Activated CD4-positive, alpha-beta memory T cell treated with anti-CD3 and anti-CD28 coated beads, Interleukin-2, amount 10 ng/mL, durations not matched to agents 7 days and 5 days (primary cell): ENCODE measurements at regions of chr4 and their contacts with region 1.

Region 1: GRCh38 chr4:40316782-40317635 is 18.1 kb upstream of the CHRNA9 start:
- DNase-seq: peak; percentile 72
- H3K4me3 Mint-ChIP-seq: peak overlapping the region; percentile 65
- H3K27ac Mint-ChIP-seq: peak overlapping the region; percentile 81
- H3K4me1 Mint-ChIP-seq: peaks cover 35% of the 10 kb centered on the region
- H3K27me3 Mint-ChIP-seq: peaks cover 8% of the 10 kb centered on the region

Region 2: GRCh38 chr4:40056716-40057585 is 260.1 kb before region 1 on chr4 and contains the start of gene N4BP2:
- CTCF ChIA-PET with region 1: interaction called, 20 read pairs
- POLR2A ChIA-PET with region 1: interaction called, 18 read pairs
- DNase-seq: peak; percentile 75
- H3K4me3 Mint-ChIP-seq: peak within 1 kb of the TSS; percentile 97
- H3K27ac Mint-ChIP-seq: peak within 1 kb of the TSS; percentile 99
- H3K4me1 Mint-ChIP-seq: peaks cover 37% of the 10 kb centered on the region
- H3K27me3 Mint-ChIP-seq: no peaks in the 10 kb centered on the region
- total RNA-seq, gene N4BP2: 22.5 to 26.8 TPM

Region 3: GRCh38 chr4:40193016-40193571 is 123.9 kb before region 1 on chr4:
- CTCF ChIA-PET with region 1: interaction called, 13 read pairs
- POLR2A ChIA-PET with region 1: interaction called, 143 read pairs
- DNase-seq: no peak
- H3K4me3 Mint-ChIP-seq: peak overlapping the region; percentile 97
- H3K27ac Mint-ChIP-seq: peak overlapping the region; percentile 99
- H3K4me1 Mint-ChIP-seq: peaks cover 67% of the 10 kb centered on the region
- H3K27me3 Mint-ChIP-seq: no peaks in the 10 kb centered on the region

Region 4: DNA sequence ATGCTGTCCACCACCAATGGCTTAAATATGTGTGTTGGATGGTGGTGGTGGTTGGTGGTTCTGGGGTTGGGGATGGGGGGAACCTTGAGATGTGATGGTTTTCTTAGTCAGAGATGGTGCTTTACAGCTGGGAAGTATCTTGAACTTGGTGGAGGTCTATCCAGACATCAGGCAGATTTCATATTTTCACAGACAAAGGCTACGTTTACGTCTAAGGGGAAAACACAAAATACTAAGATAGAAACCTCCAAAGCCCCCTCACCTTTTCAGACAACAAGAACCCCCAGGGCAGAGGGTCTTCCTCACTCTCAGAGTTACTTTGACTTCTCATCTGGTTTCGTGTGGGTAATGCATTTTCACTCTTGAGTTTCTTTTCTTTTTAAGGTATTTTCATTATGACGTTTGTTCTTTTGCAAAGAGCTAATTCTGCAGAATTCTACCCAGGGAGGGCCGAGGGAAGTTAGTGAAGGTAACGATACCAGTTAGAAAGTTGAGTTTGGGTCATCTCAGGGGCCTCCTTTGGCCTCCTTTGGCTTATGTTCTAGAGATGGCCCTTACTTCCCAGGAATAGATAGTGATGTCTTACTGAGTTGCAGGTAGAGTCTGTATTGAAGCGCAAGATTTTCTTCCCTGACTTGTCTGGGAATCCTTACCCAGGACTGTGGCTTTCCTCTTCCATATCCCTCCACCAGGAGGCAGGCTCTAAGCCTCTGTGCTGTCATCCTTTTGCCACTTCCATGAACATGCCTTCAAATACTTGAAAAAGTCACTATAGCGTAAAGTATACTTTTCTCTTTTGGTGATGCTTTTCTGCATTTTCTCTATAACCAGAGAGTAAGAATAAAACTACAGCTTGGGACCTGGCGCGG is 88.3 kb before region 1 on chr4:
- CTCF ChIA-PET with region 1: interaction called, 97 read pairs
- POLR2A ChIA-PET with region 1: interaction called, 13 read pairs
- DNase-seq: no peak
- H3K4me3 Mint-ChIP-seq: peak overlapping the region; percentile 57
- H3K27ac Mint-ChIP-seq: peak overlapping the region; percentile 75
- H3K4me1 Mint-ChIP-seq: peaks cover 95% of the 10 kb centered on the region
- H3K27me3 Mint-ChIP-seq: no peaks in the 10 kb centered on the region

Region 5: DNA sequence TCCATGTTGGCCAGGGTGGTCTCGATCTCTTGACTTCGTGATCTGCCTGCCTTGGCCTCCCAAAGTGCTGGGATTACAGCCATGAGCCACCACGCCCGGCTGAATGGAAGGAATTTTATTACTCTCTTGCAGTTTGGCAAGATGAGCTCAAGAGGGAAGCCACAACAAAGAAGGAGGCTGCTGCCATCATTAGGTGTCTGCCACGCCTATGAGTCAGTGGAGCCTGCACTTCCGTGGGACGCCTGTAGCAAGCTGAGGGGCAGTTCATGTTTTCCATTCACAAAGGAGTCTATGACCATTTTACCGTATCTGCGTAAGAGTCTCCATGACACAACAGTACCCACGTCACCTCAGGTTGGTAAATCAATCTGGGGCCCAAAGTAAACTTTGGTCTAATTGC is 33.0 kb before region 1 on chr4:
- CTCF ChIA-PET with region 1: interaction called, 14 read pairs
- POLR2A ChIA-PET with region 1: interaction called, 7 read pairs
- DNase-seq: peak; percentile 78
- H3K4me3 Mint-ChIP-seq: no peak overlapping the region
- H3K27ac Mint-ChIP-seq: peak overlapping the region; percentile 71
- H3K4me1 Mint-ChIP-seq: peaks cover 30% of the 10 kb centered on the region
- H3K27me3 Mint-ChIP-seq: no peaks in the 10 kb centered on the region